Astrocyte of the cerebellum (primary cell): ENCODE measurements at regions of chr9 and their contacts with region 1.

Region 1: GRCh38 chr9:135410831-135411473 is 68.6 kb upstream of the PPP1R26 start:
- DNase-seq: no peak
- H3K4me3 ChIP-seq: no peak overlapping the region
- CTCF ChIP-seq: no peak

Region 2: GRCh38 chr9:134794663-134795370 is 616.1 kb before region 1 on chr9:
- in situ Hi-C with region 1: loop called (anchors 5 kb)
- DNase-seq: no peak
- H3K4me3 ChIP-seq: no peak overlapping the region
- CTCF ChIP-seq: no peak